ENCODE measurements at regions of chr6 and their contacts with region 1.

Region 1: DNA sequence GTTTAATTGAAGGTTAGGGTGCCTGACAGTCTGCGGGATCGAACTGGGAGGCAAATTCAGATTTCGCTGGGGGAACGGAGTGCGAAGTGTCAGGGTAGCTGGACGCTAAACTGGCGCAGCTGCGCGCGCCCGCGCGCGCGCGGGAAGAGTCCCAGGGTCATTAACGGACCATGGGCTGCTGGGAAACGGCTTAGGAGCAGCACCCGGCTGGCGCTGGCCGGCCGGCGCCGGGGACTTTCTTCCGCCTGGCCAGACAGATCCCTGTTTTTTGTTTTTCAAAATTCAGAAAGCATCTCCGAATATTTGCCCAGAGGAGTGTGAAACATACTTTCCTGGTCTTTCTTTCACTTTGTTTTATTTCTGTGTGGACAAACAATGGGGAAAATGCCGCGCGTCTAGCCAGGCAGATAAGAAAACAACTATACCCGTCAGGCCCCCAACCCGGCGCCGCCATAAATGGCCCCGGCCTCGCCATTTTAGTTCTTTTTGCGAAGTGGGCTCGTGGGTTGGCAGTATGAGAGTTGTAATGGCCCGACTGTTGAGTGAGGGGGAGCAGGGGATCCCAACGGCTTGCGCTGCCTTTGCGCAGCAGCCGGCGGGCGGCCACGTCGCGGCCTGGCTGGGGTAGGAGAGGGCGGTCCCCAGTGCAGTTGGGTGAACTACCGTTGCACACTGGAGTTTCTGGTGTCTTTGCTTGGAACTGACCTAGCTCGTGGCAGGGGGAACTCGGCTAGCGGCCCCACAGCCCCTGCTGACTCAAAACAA is 7.1 kb downstream of the HSPA1B start:
- DNase-seq: peak; percentile 90
- H3K4me3 ChIP-seq: peak overlapping the region; percentile 74
- H3K27ac ChIP-seq: peak overlapping the region; percentile 98
- H3K4me1 ChIP-seq: peaks cover 25% of the 10 kb centered on the region
- H3K27me3 ChIP-seq: no peaks in the 10 kb centered on the region
- CTCF ChIP-seq: no peak

Region 2: DNA sequence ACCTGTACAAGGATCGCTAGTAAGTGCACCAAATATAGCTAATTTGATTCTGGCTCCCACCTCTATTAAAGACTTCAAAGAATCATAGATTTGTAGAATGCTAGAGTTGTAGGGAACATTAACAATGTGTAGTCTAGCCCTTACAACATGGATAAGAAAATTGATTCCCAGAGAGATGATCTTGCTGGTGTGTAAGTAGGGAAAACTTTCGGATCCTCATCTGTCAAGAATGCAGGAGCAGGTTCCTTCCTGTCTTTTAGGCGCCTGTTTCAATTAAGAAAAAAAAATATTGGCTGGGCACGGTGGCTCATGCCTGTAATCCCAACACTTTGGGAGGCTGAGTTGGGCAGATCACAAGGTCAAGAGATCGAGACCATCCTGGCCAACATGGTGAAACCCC is 1746.7 kb before region 1 on chr6:
- CTCF ChIA-PET with region 1: interaction called, 14 read pairs
- POLR2A ChIA-PET with region 1: no interaction called
- intact Hi-C with region 1: no loop called
- DNase-seq: no peak
- H3K4me3 ChIP-seq: no peak overlapping the region
- H3K27ac ChIP-seq: no peak overlapping the region
- H3K4me1 ChIP-seq: no peaks in the 10 kb centered on the region
- H3K27me3 ChIP-seq: peaks cover 25% of the 10 kb centered on the region
- CTCF ChIP-seq: no peak

Region 3: DNA sequence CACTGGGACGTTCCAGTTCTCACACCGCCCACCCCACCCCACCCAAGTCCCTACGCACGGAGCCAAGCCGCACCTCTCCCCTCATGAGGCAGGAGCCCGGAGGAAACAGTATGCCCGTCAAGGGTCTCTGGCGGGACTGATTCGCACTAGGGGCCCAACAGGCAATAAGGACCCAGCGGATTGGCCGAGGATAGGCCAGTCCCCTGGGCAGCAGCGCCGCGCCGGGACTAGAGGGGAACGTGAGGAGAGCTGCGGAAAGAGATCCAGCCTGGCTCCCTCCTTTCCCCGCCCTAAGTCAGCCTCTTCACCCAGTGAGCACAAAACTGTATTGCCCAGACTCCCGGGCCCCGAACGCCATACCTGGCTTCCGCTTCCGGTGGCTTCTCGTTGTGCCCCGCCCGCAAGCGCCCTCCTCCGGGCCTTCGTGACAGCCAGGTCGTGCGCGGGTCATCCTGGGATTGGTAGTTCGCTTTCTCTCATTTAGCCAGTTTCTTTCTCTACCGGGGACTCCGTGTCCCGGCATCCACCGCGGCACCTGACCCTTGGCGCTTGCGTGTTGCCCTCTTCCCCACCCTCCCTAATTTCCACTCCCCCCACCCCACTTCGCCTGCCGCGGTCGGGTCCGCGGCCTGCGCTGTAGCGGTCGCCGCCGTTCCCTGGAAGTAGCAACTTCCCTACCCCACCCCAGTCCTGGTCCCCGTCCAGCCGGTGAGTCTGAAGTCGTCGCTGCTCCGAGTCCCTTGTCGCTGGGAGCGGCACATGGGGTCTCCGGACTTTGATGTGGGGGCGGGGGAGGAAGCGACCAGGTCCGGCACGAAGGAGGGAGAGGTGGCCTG is 168.9 kb before region 1 on chr6 and contains the start of gene CSNK2B:
- CTCF ChIA-PET with region 1: no interaction called
- POLR2A ChIA-PET with region 1: interaction called, 4 read pairs
- intact Hi-C with region 1: loop called (anchors 2 kb)
- DNase-seq: peak; percentile 99
- H3K4me3 ChIP-seq: peak within 1 kb of the TSS; percentile 94
- H3K27ac ChIP-seq: peak within 1 kb of the TSS; percentile 97
- H3K4me1 ChIP-seq: peaks cover 20% of the 10 kb centered on the region
- H3K27me3 ChIP-seq: no peaks in the 10 kb centered on the region
- CTCF ChIP-seq: no peak
- total RNA-seq, gene CSNK2B: 252 and 253 TPM in 2 replicates

Region 4: DNA sequence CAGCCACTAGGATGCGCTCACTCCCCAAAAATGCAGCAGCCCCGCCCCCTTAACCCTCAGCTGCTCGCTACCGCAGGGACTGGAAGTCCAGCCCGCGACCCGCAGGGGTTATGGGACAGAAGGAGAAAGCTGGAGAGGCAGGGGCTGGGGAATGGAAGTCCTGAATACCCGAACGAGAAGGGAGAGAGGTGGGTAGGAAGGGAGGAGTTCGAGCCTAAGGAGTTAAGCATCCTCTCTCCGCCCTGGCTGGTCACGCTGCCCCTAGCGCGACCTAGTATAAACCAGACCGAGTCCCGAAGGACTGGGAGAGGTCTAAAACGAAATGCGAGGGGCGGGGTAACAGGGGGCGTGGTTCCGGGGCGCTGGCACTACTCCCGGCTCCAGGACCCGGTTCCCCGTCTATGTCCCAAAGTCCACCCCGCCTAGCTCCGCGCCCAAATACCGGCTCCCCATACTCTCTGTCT is 105.1 kb before region 1 on chr6:
- CTCF ChIA-PET with region 1: interaction called, 14 read pairs
- POLR2A ChIA-PET with region 1: interaction called, 3 read pairs
- intact Hi-C with region 1: no loop called
- DNase-seq: peak; percentile 85
- H3K4me3 ChIP-seq: peak overlapping the region; percentile 76
- H3K27ac ChIP-seq: peak overlapping the region; percentile 70
- H3K4me1 ChIP-seq: peaks cover 15% of the 10 kb centered on the region
- H3K27me3 ChIP-seq: no peaks in the 10 kb centered on the region
- CTCF ChIP-seq: no peak; the same call in 1 of the 2 replicates

Region 5: GRCh38 chr6:31791324-31792089 is 43.1 kb before region 1 on chr6:
- CTCF ChIA-PET with region 1: interaction called, 3 read pairs
- POLR2A ChIA-PET with region 1: no interaction called
- intact Hi-C with region 1: loop called (anchors 5 kb)
- DNase-seq: peak; percentile 80
- H3K4me3 ChIP-seq: no peak overlapping the region
- H3K27ac ChIP-seq: no peak overlapping the region
- H3K4me1 ChIP-seq: peaks cover 11% of the 10 kb centered on the region
- H3K27me3 ChIP-seq: no peaks in the 10 kb centered on the region
- CTCF ChIP-seq: peak; percentile 77

Region 6: GRCh38 chr6:31822036-31822821 is 12.4 kb before region 1 on chr6:
- CTCF ChIA-PET with region 1: no interaction called
- POLR2A ChIA-PET with region 1: interaction called, 10 read pairs
- intact Hi-C with region 1: no loop called
- DNase-seq: peak; percentile 72
- H3K4me3 ChIP-seq: peak overlapping the region; percentile 62
- H3K27ac ChIP-seq: peak overlapping the region; percentile 86
- H3K4me1 ChIP-seq: peaks cover 7% of the 10 kb centered on the region
- H3K27me3 ChIP-seq: no peaks in the 10 kb centered on the region
- CTCF ChIP-seq: no peak